BJ (cell line): ENCODE measurements at regions of chr17 and their contacts with region 1.

Region 1: DNA sequence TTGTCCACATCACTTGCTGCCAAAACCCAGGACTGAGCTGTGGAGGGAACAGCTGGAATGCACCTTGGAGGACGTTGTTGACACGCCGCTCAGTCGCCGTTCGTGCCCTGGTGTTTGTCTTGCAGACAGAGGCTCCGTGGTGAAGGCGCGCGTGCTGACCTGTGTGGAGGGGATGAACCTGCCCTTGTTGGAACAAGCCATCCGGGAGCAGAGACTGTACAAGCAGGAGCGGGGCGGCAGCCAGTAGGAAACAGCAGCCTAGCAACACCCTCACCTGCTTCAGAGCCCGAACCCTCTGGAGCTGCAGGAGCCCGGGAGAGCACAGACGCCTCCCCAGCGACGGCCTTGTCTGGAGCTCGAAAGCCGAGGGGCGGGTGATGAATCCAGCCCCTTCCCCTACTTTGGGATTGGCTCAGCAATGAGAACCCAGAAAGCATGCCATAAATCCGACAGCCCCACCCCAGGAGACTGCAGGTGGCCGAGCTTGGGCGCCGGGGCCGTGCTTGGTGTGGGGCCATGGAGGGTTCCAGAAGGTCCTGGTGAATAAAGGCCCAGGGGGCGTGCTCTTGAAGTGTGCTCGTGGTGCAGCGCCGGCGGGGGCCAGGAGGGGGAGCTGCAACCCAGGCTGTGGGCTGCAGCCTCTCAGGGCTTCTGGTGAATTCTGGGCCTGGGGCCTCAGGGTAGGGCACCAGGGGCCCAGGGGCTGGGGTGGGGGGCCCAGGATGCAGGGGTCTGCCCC is 470 bp upstream of the CDK3 start:
- DNase-seq: no peak
- H3K4me3 ChIP-seq: no peak overlapping the region
- H3K27me3 ChIP-seq: no peaks in the 10 kb centered on the region
- CTCF ChIP-seq: peak; percentile 79

Region 2: DNA sequence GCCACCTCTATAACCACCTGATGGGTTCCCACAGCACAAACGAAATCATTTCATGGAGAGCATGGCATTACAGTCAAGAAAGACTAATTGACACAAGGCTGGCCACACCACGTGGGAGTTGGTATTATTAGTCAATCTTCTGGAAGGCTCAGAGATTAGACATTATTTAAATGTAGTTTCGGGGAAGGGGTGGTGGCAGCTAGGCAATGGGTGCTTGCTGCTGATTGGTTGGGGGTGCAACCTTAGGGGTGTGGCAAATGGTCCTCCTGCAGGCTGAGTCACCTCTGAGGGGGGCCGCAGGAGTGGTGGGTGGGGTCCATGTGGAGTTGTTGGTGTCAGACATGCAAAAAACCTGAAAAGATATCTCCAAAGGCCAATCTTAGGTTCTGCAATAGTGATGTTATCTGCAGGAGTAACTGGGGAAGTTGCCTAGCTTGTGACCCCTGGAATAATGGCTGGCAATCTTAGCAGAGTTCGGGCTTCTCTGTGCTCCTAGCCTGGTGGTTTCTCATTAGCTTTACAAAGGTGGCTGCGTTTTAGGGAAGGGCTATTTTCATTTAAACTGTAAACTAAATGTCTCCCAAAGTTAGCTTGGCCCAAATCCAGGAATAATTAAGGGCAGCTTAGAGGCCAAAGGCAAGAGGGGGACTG is 16.5 kb before region 1 on chr17:
- CTCF ChIA-PET with region 1: interaction called, 11 read pairs
- POLR2A ChIA-PET with region 1: no interaction called
- DNase-seq: no peak
- H3K4me3 ChIP-seq: no peak overlapping the region
- H3K27me3 ChIP-seq: no peaks in the 10 kb centered on the region
- CTCF ChIP-seq: no peak